Right ventricle myocardium superior (tissue), 1 donor: ENCODE measurements at regions of chr14 and their contacts with region 1.

Region 1: GRCh38 chr14:90513161-90514014 is 116.6 kb downstream of the CALM1 start:
- DNase-seq: peak; percentile 91
- ATAC-seq: peak; percentile 89

Region 2: DNA sequence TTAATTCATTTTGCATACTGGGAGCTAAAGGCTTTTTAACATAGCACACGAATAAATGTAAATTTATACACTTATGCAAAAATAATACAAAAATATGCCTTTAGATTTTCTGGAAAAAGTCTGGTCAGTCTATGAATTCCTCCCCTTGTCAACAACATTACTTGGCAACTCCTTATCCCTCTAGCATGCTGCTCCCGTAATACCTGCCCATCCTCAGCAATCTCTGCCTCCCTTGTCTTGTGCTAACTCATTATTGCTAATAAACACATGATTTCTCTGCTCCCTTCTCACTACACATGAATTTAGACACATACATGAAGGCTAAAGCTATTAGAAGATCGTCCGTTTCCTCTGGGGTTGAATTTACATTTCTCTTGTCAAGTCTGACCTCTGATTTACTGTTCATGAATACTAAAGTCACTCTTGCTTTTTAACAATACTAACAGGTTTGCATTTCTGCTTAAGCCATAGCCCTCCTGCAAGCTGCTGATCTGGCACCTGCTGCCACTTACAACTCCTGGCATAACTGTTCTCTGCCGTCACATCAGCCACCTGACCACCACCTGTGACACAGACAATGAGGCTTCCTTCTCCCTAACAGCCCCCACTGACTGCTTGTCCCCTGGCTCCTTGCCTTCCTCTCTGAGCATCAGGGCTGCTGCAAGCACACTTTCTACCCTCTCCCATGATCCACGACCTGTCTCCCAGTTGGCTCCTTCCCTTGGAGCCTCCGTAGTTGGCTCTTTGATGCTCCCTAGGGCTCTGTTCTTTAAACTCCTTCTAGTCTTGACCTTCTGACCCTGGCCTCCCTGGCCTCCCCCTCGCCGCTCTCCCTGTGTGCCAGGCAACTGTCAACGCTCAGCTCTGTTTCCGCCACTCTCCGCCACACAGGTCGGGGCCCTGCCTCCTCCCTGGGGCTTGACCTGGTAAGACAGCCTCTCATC is 61.1 kb after region 1 on chr14:
- intact Hi-C with region 1: loop called (anchors 5 kb)
- DNase-seq: peak; percentile 80
- ATAC-seq: peak; percentile 83